ENCODE measurements at regions of chr4 and their contacts with region 1.

Region 1: DNA sequence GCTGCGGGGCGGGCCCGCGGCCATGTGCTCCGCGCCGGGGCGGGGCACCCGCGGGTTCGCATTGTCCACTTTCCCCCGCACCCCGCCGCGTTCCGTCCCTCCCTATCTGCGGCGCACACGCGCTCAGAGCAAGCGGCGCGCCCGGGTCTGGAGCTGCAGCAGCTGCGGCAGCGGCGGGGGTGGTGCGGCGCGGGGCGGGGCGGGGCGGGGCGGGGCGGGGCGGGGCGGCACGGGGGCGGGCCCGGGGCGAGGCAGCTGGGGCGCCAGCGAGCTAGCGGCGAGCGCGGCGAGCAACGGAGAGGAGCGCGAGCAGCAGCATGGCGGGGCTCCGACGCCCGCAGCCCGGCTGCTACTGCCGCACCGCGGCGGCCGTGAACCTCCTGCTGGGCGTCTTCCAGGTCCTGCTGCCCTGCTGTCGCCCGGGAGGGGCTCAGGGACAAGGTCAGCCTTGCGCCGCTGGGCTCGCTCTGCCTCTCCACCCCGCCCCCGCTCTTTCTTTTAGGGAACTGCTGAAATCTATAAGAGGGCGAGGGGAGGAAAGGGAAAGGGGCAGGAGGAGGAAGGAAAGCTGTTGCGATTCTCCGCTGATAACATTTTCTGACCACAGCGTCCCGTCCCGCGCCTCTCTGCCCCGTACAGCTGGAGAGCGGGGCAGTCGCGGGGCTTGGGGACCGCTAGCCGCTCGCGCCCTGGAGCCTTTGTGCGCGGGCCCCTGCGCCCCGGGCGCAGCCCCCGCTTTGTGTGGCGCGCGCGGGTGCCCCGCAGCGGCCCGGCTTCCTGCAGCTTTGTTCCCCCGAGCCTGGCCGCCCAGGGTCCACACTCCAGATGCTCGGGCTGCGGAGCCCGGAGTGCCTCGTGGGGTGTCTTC is at the start of gene TMEM131L:
- DNase-seq: peak; percentile 78
- H3K4me3 Mint-ChIP-seq: peak within 1 kb of the TSS; percentile 93
- H3K27ac Mint-ChIP-seq: peak within 1 kb of the TSS; percentile 88
- H3K4me1 Mint-ChIP-seq: peaks cover 47% of the 10 kb centered on the region
- H3K27me3 Mint-ChIP-seq: peaks cover 1% of the 10 kb centered on the region
- total RNA-seq, gene TMEM131L: 32.7 to 33.3 TPM

Region 2: GRCh38 chr4:153432968-153433753 is 33.2 kb before region 1 on chr4:
- CTCF ChIA-PET with region 1: interaction called, 15 read pairs
- POLR2A ChIA-PET with region 1: interaction called, 11 read pairs
- intact Hi-C with region 1: loop called (anchors 1 kb)
- DNase-seq: peak; percentile 88
- H3K4me3 Mint-ChIP-seq: peak overlapping the region; percentile 77
- H3K27ac Mint-ChIP-seq: peak overlapping the region; percentile 74
- H3K4me1 Mint-ChIP-seq: peaks cover 52% of the 10 kb centered on the region
- H3K27me3 Mint-ChIP-seq: no peaks in the 10 kb centered on the region

Region 3: DNA sequence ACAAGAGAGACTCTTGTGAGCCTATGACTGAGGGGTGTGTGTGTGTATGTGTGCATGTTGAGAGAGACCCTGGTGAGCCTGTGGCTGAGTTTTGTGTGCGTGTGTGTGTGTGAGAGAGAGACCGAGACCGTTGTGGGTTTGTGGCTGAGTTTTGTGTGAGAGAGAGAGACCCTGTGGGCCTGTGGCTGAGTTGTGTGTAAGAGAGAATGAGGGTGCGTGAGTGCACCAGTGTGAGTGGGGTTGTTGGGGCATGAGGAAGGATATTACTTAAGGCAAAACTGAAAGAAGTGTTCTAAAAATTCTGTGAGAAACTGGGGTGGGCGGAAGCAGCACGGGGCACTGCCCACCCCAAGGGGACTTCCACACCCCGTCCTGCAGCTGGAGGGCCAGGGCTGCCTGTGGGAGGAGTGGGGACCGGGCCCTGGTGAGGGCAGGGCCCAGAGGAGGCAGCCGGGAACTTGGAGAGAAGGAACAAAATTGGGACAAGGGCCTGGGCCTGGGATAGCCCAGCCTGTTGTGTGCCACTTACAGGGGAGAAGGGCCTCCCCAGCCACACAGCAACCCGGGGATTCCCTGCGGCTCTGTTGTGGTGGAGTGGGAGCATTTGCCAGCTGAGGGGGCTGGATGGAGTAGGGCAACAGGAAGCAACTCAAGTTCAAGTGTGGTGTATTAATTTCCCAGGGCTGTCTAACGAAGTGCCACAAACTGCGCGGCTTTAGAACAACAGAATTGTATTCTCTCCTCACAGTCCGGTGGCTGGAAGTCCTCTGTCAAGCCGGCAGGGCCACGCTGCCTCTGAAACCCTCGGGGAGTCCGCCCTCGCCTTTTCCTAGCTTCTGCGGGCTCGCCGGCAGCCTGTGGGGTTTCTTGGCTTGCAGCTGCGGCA is 21.9 kb after region 1 on chr4:
- CTCF ChIA-PET with region 1: interaction called, 33 read pairs
- POLR2A ChIA-PET with region 1: interaction called, 13 read pairs
- intact Hi-C with region 1: loop called (anchors 1 kb)
- DNase-seq: peak; percentile 88
- H3K4me3 Mint-ChIP-seq: peak overlapping the region; percentile 56
- H3K27ac Mint-ChIP-seq: peak overlapping the region; percentile 87
- H3K4me1 Mint-ChIP-seq: peaks cover 73% of the 10 kb centered on the region
- H3K27me3 Mint-ChIP-seq: no peaks in the 10 kb centered on the region

Region 4: GRCh38 chr4:153521999-153522801 is 55.9 kb after region 1 on chr4:
- CTCF ChIA-PET with region 1: interaction called, 14 read pairs
- POLR2A ChIA-PET with region 1: interaction called, 7 read pairs
- intact Hi-C with region 1: loop called (anchors 1 kb)
- DNase-seq: peak; percentile 80
- H3K4me3 Mint-ChIP-seq: peak overlapping the region; percentile 67
- H3K27ac Mint-ChIP-seq: peak overlapping the region; percentile 96
- H3K4me1 Mint-ChIP-seq: peaks cover 91% of the 10 kb centered on the region
- H3K27me3 Mint-ChIP-seq: no peaks in the 10 kb centered on the region

Region 5: DNA sequence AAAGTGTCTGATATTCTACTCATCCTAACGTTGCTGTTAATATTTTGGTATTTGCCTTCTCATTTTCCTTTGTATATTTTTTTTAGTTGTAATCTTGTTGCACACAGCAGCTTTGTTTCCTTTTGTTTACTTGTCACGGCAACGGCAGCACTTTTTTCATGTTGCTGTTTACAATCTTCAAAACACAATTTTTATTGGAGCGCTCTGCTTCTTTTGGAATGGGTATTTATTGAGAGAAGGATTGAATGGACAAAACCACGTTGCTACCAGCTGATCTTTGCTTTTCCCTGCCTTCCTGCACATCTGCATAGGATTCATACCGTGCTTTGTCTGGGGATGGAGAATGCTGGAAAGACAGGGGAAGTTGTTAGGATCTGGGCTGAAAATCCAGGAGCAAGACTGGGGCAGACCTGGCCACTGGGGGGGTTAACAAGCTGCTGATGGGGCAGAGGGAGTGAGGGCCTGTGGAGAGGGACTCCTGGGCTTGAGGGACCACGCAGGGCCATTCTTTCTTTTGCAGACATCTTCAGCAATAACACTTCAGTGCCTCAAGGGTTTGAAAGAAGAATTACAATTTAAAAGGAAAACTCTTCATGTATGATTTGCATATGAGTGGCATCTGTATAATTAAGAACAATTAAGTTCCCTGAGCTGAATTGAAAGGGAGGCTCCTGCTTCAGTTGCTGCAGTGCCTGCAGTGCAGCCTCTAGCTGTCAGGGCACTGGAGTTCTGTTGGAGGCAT is 69.6 kb after region 1 on chr4:
- CTCF ChIA-PET with region 1: interaction called, 19 read pairs
- POLR2A ChIA-PET with region 1: interaction called, 15 read pairs
- intact Hi-C with region 1: no loop called
- DNase-seq: no peak
- H3K4me3 Mint-ChIP-seq: peak overlapping the region; percentile 8
- H3K27ac Mint-ChIP-seq: peak overlapping the region; percentile 36
- H3K4me1 Mint-ChIP-seq: peaks cover 73% of the 10 kb centered on the region
- H3K27me3 Mint-ChIP-seq: no peaks in the 10 kb centered on the region